ENCODE measurements at regions of chr3 and their contacts with region 1.

Region 1: DNA sequence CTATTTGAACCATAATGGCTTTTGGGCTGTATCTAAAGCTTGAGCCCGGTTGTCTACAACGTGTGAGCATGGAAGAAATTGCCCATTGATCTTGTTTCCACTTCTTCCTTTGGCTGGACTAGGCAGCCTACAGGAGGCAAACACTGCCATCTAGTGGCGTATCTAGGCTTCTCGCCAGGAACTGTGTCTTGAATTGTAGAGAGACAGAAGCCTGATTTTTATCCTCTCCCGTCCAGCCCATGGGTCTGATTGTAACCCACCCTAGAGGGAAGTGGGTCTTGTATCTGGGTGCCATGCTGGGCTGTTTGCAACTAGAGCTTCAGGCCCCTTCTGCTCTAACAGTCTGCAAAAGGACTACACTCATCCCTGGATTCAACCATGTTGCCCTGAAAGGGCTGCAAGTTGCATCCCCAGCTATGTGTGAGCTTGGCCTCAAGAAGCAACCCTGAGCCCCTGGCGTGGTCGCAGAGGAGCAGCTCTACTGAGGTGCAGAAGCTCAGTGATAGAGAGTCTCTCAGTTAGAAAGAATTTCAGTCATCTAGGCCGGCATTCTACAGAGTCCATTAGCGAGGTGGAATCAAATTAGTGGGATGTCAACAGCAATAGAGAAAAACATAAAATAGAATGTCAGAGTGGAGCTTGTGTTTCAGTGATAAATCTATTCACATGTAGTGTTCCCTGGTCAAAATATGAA is 170.2 kb upstream of the UMPS start:
- DNase-seq: no peak
- ATAC-seq: peak; percentile 95
- H3K4me3 ChIP-seq: no peak overlapping the region
- H3K27ac ChIP-seq: no peak overlapping the region
- H3K4me1 ChIP-seq: no peaks in the 10 kb centered on the region
- H3K27me3 ChIP-seq: 0 out of 4 replicates have a peak, but pooled peaks cover 0 to 2% of the 10 kb centered on the region in 2 experiments
- CTCF ChIP-seq: peak; percentile 87 to 90 (median 88)
- EP300 ChIP-seq: no peak
- POLR2A ChIP-seq: no peak
- RAD21 ChIP-seq: peak; percentile 77

Region 2: GRCh38 chr3:124078953-124079911 is 480.8 kb before region 1 on chr3:
- CTCF ChIA-PET with region 1: no interaction called
- POLR2A ChIA-PET with region 1: no interaction called
- RAD21 ChIA-PET with region 1: no interaction called
- SMC1A ChIA-PET with region 1: no interaction called
- in situ Hi-C with region 1: no loop called
- intact Hi-C with region 1: loop called (anchors 10 kb)
- DNase-seq: no peak
- ATAC-seq: peak; percentile 64; the same call in 2 of the 3 replicates
- H3K4me3 ChIP-seq: no peak overlapping the region
- H3K27ac ChIP-seq: no peak overlapping the region
- H3K4me1 ChIP-seq: no peaks in the 10 kb centered on the region
- H3K27me3 ChIP-seq: peaks cover 0 to 5% of the 10 kb centered on the region in 2 experiments; a peak in 2 of 4 replicates
- CTCF ChIP-seq: peak; percentile 53 to 63 (median 59)
- EP300 ChIP-seq: no peak
- POLR2A ChIP-seq: no peak
- RAD21 ChIP-seq: peak; percentile 70

Region 3: GRCh38 chr3:124442465-124442864 is 117.6 kb before region 1 on chr3:
- CTCF ChIA-PET with region 1: no interaction called
- POLR2A ChIA-PET with region 1: no interaction called
- RAD21 ChIA-PET with region 1: no interaction called
- SMC1A ChIA-PET with region 1: no interaction called
- in situ Hi-C with region 1: no loop called
- intact Hi-C with region 1: no loop called
- DNase-seq: no peak
- ATAC-seq: no peak
- H3K4me3 ChIP-seq: no peak overlapping the region
- H3K27ac ChIP-seq: no peak overlapping the region
- H3K4me1 ChIP-seq: no peaks in the 10 kb centered on the region
- H3K27me3 ChIP-seq: no peaks in the 10 kb centered on the region; a peak in 1 of 4 replicates
- CTCF ChIP-seq: no peak
- EP300 ChIP-seq: no peak
- POLR2A ChIP-seq: no peak
- RAD21 ChIP-seq: no peak

Region 4: DNA sequence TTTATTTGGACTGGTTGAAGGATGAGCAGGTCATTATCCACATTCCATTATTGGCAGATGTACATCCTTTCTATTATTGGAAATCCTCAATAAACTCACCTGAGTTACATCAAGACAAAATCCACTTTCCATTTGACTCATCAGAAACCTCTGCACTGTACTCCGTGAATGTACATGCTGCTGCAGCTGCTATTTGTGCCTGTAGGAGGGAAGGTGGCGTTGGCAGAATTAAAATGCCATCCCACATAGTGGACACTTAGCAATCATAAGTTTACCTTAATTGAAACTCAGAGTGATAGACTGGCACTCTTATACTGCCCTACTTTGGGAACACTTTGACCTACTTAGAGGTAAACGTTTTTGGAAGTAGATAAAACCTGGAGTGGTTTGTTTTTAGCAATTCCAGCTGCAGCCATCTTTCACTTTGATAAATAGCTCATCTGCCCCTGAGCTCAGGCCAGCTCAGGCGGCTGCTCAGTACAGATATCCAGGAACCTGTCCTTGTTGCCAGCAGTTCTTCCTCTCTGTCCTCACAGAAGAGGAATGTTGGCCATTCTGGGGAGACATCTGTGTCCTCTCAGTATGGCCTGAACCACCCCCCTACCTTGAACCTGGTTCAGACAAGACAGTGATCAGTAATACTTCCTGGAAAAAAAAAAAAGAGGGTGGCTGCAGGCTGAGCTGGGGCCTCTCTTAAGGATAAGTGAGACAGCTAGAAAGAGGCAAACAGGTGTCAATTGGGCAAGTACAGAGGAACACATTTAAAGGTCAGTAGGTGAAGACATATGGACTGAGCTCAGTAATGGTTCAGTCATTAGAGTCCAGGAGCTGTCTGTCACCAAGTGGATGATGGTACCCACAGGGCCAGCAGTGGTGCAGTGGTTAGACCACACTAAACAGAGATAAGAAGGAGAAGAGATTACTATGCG is 16.8 kb after region 1 on chr3:
- CTCF ChIA-PET with region 1: interaction called, 28 read pairs
- POLR2A ChIA-PET with region 1: interaction called, 3 read pairs
- RAD21 ChIA-PET with region 1: interaction called, 12 read pairs
- SMC1A ChIA-PET with region 1: interaction called, 5 read pairs
- in situ Hi-C with region 1: no loop called
- intact Hi-C with region 1: no loop called
- DNase-seq: peak; percentile 30
- ATAC-seq: peak; percentile 84
- H3K4me3 ChIP-seq: no peak overlapping the region
- H3K27ac ChIP-seq: no peak overlapping the region
- H3K4me1 ChIP-seq: peaks cover 32% of the 10 kb centered on the region
- H3K27me3 ChIP-seq: no peaks in the 10 kb centered on the region
- CTCF ChIP-seq: peak; percentile 11 to 43 (median 43); a peak in 4 of 6 replicates
- EP300 ChIP-seq: peak in 1 of 2 experiments; percentile 56; a peak in 1 of 4 replicates
- POLR2A ChIP-seq: no peak
- RAD21 ChIP-seq: peak; percentile 19; the same call in 1 of the 2 replicates

Region 5: GRCh38 chr3:124634210-124635168 is 74.5 kb after region 1 on chr3:
- CTCF ChIA-PET with region 1: interaction called, 22 read pairs
- POLR2A ChIA-PET with region 1: no interaction called
- RAD21 ChIA-PET with region 1: interaction called, 11 read pairs
- SMC1A ChIA-PET with region 1: interaction called, 10 read pairs
- in situ Hi-C with region 1: no loop called
- intact Hi-C with region 1: no loop called
- DNase-seq: no peak
- ATAC-seq: peak; percentile 53
- H3K4me3 ChIP-seq: no peak overlapping the region
- H3K27ac ChIP-seq: no peak overlapping the region
- H3K4me1 ChIP-seq: peaks cover 22% of the 10 kb centered on the region
- H3K27me3 ChIP-seq: no peaks in the 10 kb centered on the region
- CTCF ChIP-seq: no peak
- EP300 ChIP-seq: no peak
- POLR2A ChIP-seq: no peak
- RAD21 ChIP-seq: no peak

Region 6: GRCh38 chr3:124660599-124660998 is 100.6 kb after region 1 on chr3:
- CTCF ChIA-PET with region 1: interaction called, 6 read pairs
- POLR2A ChIA-PET with region 1: no interaction called
- RAD21 ChIA-PET with region 1: interaction called, 3 read pairs
- SMC1A ChIA-PET with region 1: interaction called, 18 read pairs
- in situ Hi-C with region 1: no loop called
- intact Hi-C with region 1: no loop called
- DNase-seq: no peak
- ATAC-seq: no peak
- H3K4me3 ChIP-seq: no peak overlapping the region
- H3K27ac ChIP-seq: no peak overlapping the region
- H3K4me1 ChIP-seq: peaks cover 10% of the 10 kb centered on the region; the same call in 1 of the 2 replicates
- H3K27me3 ChIP-seq: no peaks in the 10 kb centered on the region
- CTCF ChIP-seq: no peak
- EP300 ChIP-seq: no peak
- POLR2A ChIP-seq: no peak
- RAD21 ChIP-seq: no peak

Region 7: GRCh38 chr3:124695369-124695768 is 135.3 kb after region 1 on chr3:
- CTCF ChIA-PET with region 1: interaction called, 577 read pairs
- POLR2A ChIA-PET with region 1: no interaction called
- RAD21 ChIA-PET with region 1: interaction called, 199 read pairs
- SMC1A ChIA-PET with region 1: interaction called, 309 read pairs
- in situ Hi-C with region 1: no loop called
- intact Hi-C with region 1: no loop called
- DNase-seq: no peak
- ATAC-seq: no peak
- H3K4me3 ChIP-seq: no peak overlapping the region
- H3K27ac ChIP-seq: no peak overlapping the region
- H3K4me1 ChIP-seq: no peaks in the 10 kb centered on the region
- H3K27me3 ChIP-seq: peaks cover 0 to 2% of the 10 kb centered on the region in 2 experiments; a peak in 1 of 4 replicates
- CTCF ChIP-seq: no peak
- EP300 ChIP-seq: no peak
- POLR2A ChIP-seq: no peak
- RAD21 ChIP-seq: no peak

Region 8: GRCh38 chr3:124895756-124896155 is 335.7 kb after region 1 on chr3:
- CTCF ChIA-PET with region 1: interaction called, 8 read pairs
- POLR2A ChIA-PET with region 1: no interaction called
- RAD21 ChIA-PET with region 1: interaction called, 5 read pairs
- SMC1A ChIA-PET with region 1: interaction called, 3 read pairs
- in situ Hi-C with region 1: loop called (anchors 5 kb)
- intact Hi-C with region 1: loop called (anchors 5 kb)
- DNase-seq: no peak
- ATAC-seq: no peak
- H3K4me3 ChIP-seq: no peak overlapping the region
- H3K27ac ChIP-seq: no peak overlapping the region
- H3K4me1 ChIP-seq: no peaks in the 10 kb centered on the region; the same call in 1 of the 2 replicates
- H3K27me3 ChIP-seq: no peaks in the 10 kb centered on the region
- CTCF ChIP-seq: no peak
- EP300 ChIP-seq: no peak
- POLR2A ChIP-seq: no peak
- RAD21 ChIP-seq: no peak

Measured in GM12878 (cell line).